CD8-positive, alpha-beta memory T cell (primary cell): ENCODE measurements at regions of chr6 and their contacts with region 1.

Region 1: GRCh38 chr6:26054857-26055669 is 32.2 kb upstream of the HFE start:
- DNase-seq: peak; percentile 74 to 89 (median 86)
- H3K4me3 ChIP-seq: peak overlapping the region; percentile 92
- H3K4me3 Mint-ChIP-seq: peak overlapping the region; percentile 90 to 97 (median 94)
- H3K27ac ChIP-seq: peak overlapping the region; percentile 96
- H3K27ac Mint-ChIP-seq: peak overlapping the region; percentile 90 to 99 (median 97)
- H3K4me1 ChIP-seq: peaks cover 9% of the 10 kb centered on the region
- H3K4me1 Mint-ChIP-seq: peaks cover 17 to 30% (median 26%) of the 10 kb centered on the region in 3 donors
- H3K27me3 ChIP-seq: no peaks in the 10 kb centered on the region
- H3K27me3 Mint-ChIP-seq: peaks cover 0 to 4% of the 10 kb centered on the region in 2 donors

Region 2: DNA sequence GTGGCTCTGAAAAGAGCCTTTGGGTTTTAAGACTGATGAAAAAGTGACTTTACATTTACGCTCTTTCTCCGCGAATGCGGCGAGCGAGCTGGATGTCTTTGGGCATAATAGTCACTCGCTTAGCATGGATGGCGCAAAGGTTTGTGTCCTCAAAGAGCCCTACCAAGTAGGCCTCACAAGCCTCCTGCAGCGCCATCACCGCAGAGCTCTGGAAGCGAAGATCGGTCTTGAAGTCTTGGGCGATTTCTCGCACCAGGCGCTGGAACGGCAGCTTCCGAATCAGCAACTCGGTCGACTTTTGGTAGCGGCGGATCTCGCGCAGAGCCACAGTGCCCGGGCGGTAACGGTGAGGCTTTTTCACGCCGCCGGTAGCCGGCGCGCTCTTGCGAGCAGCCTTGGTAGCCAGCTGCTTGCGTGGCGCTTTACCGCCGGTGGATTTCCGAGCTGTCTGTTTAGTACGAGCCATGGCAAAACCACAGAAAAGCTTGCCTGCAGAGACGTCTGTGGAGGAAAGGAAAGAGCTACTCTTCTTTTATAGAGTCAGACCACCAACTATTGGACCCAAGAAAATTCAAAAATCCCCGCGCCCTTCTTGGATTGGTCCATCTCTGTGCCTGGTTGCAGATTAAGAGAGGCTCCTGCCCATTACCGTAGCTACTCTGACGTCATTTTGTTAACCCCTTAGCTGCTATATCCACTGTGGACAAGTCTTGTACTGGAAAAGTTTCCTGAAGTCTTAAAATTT is 23.3 kb before region 1 on chr6:
- CTCF ChIA-PET with region 1: interaction called, 12 read pairs
- POLR2A ChIA-PET with region 1: interaction called, 42 read pairs
- DNase-seq: peak; percentile 75 to 91 (median 86)
- H3K4me3 ChIP-seq: peak overlapping the region; percentile 70
- H3K4me3 Mint-ChIP-seq: peak overlapping the region; percentile 89 to 97 (median 95)
- H3K27ac ChIP-seq: peak overlapping the region; percentile 85
- H3K27ac Mint-ChIP-seq: peak overlapping the region; percentile 96 to 99 (median 98)
- H3K4me1 ChIP-seq: peaks cover 30% of the 10 kb centered on the region
- H3K4me1 Mint-ChIP-seq: peaks cover 47 to 69% (median 53%) of the 10 kb centered on the region in 3 donors
- H3K27me3 ChIP-seq: no peaks in the 10 kb centered on the region
- H3K27me3 Mint-ChIP-seq: peaks cover 0 to 6% of the 10 kb centered on the region in 2 donors

Region 3: GRCh38 chr6:26087284-26088115 is 32.4 kb after region 1 on chr6 and contains the start of gene HFE:
- CTCF ChIA-PET with region 1: interaction called, 375 read pairs
- POLR2A ChIA-PET with region 1: interaction called, 10 read pairs
- DNase-seq: peak; percentile 8 to 49 (median 27)
- H3K4me3 ChIP-seq: peak within 1 kb of the TSS; percentile 86
- H3K4me3 Mint-ChIP-seq: peak within 1 kb of the TSS; percentile 88 to 96 (median 91)
- H3K27ac ChIP-seq: peak within 1 kb of the TSS; percentile 70
- H3K27ac Mint-ChIP-seq: peak within 1 kb of the TSS; percentile 78 to 95 (median 89)
- H3K4me1 ChIP-seq: peaks cover 26% of the 10 kb centered on the region
- H3K4me1 Mint-ChIP-seq: peaks cover 31 to 37% (median 36%) of the 10 kb centered on the region in 3 donors
- H3K27me3 ChIP-seq: no peaks in the 10 kb centered on the region
- H3K27me3 Mint-ChIP-seq: no peaks in the 10 kb centered on the region
- total RNA-seq, gene HFE: 0.37 to 1.1 TPM

Region 4: DNA sequence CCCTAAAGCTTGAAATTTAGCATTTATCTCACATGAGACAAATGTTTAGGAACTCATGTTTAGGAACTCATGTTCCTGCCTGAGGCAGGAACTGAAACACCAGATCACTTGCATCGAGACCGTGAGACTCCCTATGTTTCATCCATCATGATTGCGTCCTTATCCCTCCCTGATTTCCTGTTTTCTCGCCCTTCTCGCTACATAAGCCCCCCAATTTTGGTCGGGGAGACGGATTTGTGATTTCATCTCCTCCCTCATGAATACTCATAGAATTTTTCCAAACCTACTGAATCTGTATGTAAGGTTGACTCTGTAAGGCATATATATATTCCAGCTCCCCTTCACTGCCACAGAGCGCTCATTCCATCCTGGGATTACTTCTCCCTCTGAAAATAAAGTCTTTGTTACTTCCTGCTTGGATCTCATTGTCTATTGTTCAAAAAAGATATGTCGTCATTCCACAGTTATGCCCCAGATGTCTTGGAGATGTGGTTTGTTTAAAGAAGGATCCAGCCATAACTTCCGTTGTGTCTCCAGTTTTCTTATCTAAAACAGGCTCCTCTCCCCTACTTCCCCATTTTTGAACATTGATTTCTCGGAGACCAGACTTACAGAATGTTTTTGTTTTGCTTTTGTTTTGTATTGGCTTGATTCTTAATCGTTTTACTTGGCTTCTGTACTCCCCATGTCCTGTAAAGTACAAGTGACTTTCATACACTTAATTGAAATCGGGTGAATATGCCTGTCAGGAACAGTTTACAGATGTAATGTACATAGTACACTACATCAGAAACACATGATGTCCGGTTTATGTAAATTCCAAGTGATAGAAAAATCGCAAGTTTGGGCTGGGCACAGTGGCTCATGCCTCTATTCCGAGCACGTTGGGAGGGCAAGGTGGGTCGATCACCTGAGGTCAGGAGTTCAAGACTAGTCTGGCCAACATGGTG is 150.8 kb after region 1 on chr6:
- CTCF ChIA-PET with region 1: no interaction called
- POLR2A ChIA-PET with region 1: no interaction called
- DNase-seq: no peak
- H3K4me3 ChIP-seq: peak overlapping the region; percentile 73
- H3K4me3 Mint-ChIP-seq: no peak overlapping the region
- H3K27ac ChIP-seq: peak overlapping the region; percentile 99
- H3K27ac Mint-ChIP-seq: no peak overlapping the region
- H3K4me1 ChIP-seq: peaks cover 23% of the 10 kb centered on the region
- H3K4me1 Mint-ChIP-seq: peaks cover 8 to 21% (median 11%) of the 10 kb centered on the region in 3 donors
- H3K27me3 ChIP-seq: no peaks in the 10 kb centered on the region
- H3K27me3 Mint-ChIP-seq: peaks cover 0 to 8% of the 10 kb centered on the region in 2 donors